GM10248 (cell line): ENCODE measurements at regions of chr2 and their contacts with region 1.

Region 1: DNA sequence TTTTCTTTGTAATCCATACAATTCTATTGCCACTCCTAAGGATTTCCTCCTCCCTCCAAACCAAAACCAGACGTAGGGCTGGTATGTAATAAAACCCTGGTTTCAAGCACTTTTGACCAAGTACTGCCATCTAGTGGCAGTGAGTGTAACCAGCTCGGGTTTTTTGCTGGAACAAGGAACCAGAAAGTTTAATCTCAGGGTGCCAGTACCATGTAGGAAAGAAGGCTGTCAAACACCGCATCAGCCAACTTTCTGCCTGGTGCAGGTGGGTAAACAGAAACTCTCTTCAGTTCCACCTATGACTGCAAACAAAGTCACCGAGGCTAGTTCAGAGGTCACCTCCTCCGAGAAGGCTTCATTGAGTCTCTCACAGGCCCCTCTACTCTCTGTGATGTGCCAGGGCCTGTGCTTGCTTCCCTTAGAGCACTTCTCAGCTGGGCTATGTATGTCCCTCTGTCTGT is 10.2 kb upstream of the THNSL2 start:
- DNase-seq: peak; percentile 57
- CTCF ChIP-seq: peak; percentile 73

Region 2: DNA sequence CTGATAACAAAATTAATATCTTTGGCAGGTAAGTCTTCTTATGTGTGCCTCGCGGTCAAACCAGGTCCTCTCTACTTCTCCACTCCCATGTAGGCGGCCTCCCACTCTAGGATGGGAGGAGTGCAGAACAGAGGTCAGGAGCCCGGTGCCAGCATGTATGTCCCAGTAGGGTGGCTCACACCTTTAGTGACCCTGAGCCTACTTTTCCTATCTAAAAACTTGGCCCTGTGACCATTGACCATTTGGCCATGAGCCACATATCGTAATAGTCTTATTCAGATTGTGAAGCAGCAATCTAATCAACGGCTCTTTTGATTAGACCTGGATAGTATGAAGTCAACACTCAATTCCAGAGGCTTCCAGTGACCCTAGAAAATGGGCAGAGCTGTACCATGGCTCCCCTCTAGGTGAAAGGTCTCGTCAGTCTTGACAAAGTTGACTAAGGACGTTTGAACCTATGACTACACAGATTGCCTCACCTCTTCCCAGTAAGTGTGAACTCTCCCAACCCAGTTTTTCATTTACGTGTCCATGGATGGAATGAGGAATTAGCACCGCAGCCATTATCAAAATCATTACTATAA is 15.0 kb before region 1 on chr2:
- CTCF ChIA-PET with region 1: interaction called, 16 read pairs
- POLR2A ChIA-PET with region 1: no interaction called
- DNase-seq: no peak
- CTCF ChIP-seq: no peak

Region 3: GRCh38 chr2:88170472-88170892 is 10.5 kb after region 1 on chr2:
- CTCF ChIA-PET with region 1: interaction called, 26 read pairs
- POLR2A ChIA-PET with region 1: no interaction called
- DNase-seq: no peak
- CTCF ChIP-seq: no peak

Region 4: DNA sequence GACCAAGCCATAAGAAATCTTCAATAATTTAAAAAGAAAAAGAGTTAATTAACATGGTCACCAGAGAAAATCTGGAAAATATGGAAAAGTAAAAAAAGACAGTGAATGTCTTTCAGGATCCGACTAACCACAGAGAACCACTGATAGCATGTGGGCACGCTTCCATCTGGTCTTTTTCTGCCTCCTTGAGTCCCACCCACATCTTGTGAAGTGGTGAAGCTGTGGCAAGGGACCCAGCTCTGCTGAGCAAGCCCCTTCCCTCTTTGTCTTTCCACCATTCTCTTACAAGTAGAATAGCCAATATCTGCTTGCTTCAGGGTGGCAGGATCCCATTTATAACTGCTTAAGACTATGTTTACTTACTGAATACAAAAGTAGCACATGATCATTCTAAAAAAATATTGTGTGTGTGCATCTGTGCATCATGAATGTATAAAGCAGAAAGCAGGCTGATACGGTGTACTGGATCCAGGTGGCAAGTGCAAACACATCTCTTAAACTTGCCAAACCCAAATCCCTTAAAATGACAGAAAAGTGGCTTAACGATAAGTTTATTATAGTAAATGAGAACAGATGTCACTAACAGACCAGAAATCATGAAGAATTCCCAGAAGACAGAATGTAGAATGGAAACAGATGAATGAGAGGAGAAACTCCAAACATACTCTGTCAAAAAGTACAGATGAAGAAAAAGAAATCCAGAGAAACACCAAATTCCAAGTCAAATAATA is 240.2 kb after region 1 on chr2:
- CTCF ChIA-PET with region 1: no interaction called
- POLR2A ChIA-PET with region 1: no interaction called
- DNase-seq: no peak
- CTCF ChIP-seq: no peak